GM12878 (cell line): ENCODE measurements at regions of chr17 and their contacts with region 1.

Region 1: GRCh38 chr17:37373530-37374159 is 2.1 kb upstream of the C17orf78 start:
- DNase-seq: no peak
- ATAC-seq: peak; percentile 99
- H3K4me3 ChIP-seq: no peak overlapping the region
- H3K27ac ChIP-seq: no peak overlapping the region
- H3K4me1 ChIP-seq: no peaks in the 10 kb centered on the region
- H3K27me3 ChIP-seq: no peaks in the 10 kb centered on the region
- CTCF ChIP-seq: peak; percentile 99 to 100 (median 100); a peak in 5 of 6 replicates
- EP300 ChIP-seq: no peak
- POLR2A ChIP-seq: no peak
- RAD21 ChIP-seq: peak; percentile 100

Region 2: GRCh38 chr17:36629252-36629847 is 744.3 kb before region 1 on chr17:
- CTCF ChIA-PET with region 1: interaction called, 9 read pairs
- POLR2A ChIA-PET with region 1: no interaction called
- RAD21 ChIA-PET with region 1: interaction called, 6 read pairs
- SMC1A ChIA-PET with region 1: interaction called, 4 read pairs
- in situ Hi-C with region 1: no loop called
- intact Hi-C with region 1: loop called (anchors 5 kb)
- DNase-seq: peak; percentile 12
- ATAC-seq: peak; percentile 99
- H3K4me3 ChIP-seq: no peak overlapping the region
- H3K27ac ChIP-seq: no peak overlapping the region
- H3K4me1 ChIP-seq: no peaks in the 10 kb centered on the region
- H3K27me3 ChIP-seq: peaks cover 0 to 2% of the 10 kb centered on the region in 2 experiments; a peak in 2 of 4 replicates
- CTCF ChIP-seq: peak; percentile 98 to 99 (median 98); a peak in 5 of 6 replicates
- EP300 ChIP-seq: no peak
- POLR2A ChIP-seq: no peak
- RAD21 ChIP-seq: peak; percentile 92

Region 3: GRCh38 chr17:37358830-37359681 is 14.6 kb before region 1 on chr17:
- CTCF ChIA-PET with region 1: interaction called, 19 read pairs
- POLR2A ChIA-PET with region 1: interaction called, 5 read pairs
- RAD21 ChIA-PET with region 1: interaction called, 12 read pairs
- SMC1A ChIA-PET with region 1: interaction called, 10 read pairs
- in situ Hi-C with region 1: no loop called
- intact Hi-C with region 1: no loop called
- DNase-seq: peak; percentile 80
- ATAC-seq: peak; percentile 95
- H3K4me3 ChIP-seq: peak overlapping the region; percentile 78
- H3K27ac ChIP-seq: peak overlapping the region; percentile 71
- H3K4me1 ChIP-seq: peaks cover 12% of the 10 kb centered on the region
- H3K27me3 ChIP-seq: no peaks in the 10 kb centered on the region
- CTCF ChIP-seq: 0 out of 6 replicates have a peak, but pooled peaks of 1 of the 3 experiments have one; percentile 10
- EP300 ChIP-seq: no peak
- POLR2A ChIP-seq: peak; percentile 79
- RAD21 ChIP-seq: no peak

Region 4: GRCh38 chr17:37399404-37399803 is 25.8 kb after region 1 on chr17:
- CTCF ChIA-PET with region 1: interaction called, 187 read pairs
- POLR2A ChIA-PET with region 1: interaction called, 5 read pairs
- RAD21 ChIA-PET with region 1: interaction called, 81 read pairs
- SMC1A ChIA-PET with region 1: interaction called, 81 read pairs
- in situ Hi-C with region 1: no loop called
- intact Hi-C with region 1: loop called (anchors 1 kb)
- DNase-seq: no peak
- ATAC-seq: no peak
- H3K4me3 ChIP-seq: no peak overlapping the region
- H3K27ac ChIP-seq: no peak overlapping the region
- H3K4me1 ChIP-seq: peaks cover 10% of the 10 kb centered on the region
- H3K27me3 ChIP-seq: no peaks in the 10 kb centered on the region
- CTCF ChIP-seq: no peak
- EP300 ChIP-seq: no peak
- POLR2A ChIP-seq: no peak
- RAD21 ChIP-seq: no peak

Region 5: GRCh38 chr17:37570527-37571093 is 197.0 kb after region 1 on chr17:
- CTCF ChIA-PET with region 1: interaction called, 18 read pairs
- POLR2A ChIA-PET with region 1: no interaction called
- RAD21 ChIA-PET with region 1: interaction called, 5 read pairs
- SMC1A ChIA-PET with region 1: interaction called, 8 read pairs
- in situ Hi-C with region 1: no loop called
- intact Hi-C with region 1: no loop called
- DNase-seq: no peak
- ATAC-seq: peak; percentile 71
- H3K4me3 ChIP-seq: no peak overlapping the region
- H3K27ac ChIP-seq: no peak overlapping the region
- H3K4me1 ChIP-seq: no peaks in the 10 kb centered on the region
- H3K27me3 ChIP-seq: no peaks in the 10 kb centered on the region
- CTCF ChIP-seq: peak; percentile 40 to 50 (median 50)
- EP300 ChIP-seq: no peak
- POLR2A ChIP-seq: no peak
- RAD21 ChIP-seq: 0 out of 2 replicates have a peak, but pooled peaks have one; percentile 33

Region 6: GRCh38 chr17:38428643-38429371 is 1055.2 kb after region 1 on chr17:
- CTCF ChIA-PET with region 1: no interaction called
- POLR2A ChIA-PET with region 1: no interaction called
- RAD21 ChIA-PET with region 1: no interaction called
- SMC1A ChIA-PET with region 1: no interaction called
- in situ Hi-C with region 1: no loop called
- intact Hi-C with region 1: no loop called
- DNase-seq: no peak
- ATAC-seq: peak; percentile 49
- H3K4me3 ChIP-seq: peak overlapping the region; percentile 80; the same call in 1 of the 2 replicates
- H3K27ac ChIP-seq: no peak overlapping the region
- H3K4me1 ChIP-seq: peaks cover 4% of the 10 kb centered on the region
- H3K27me3 ChIP-seq: no peaks in the 10 kb centered on the region; a peak in 1 of 4 replicates
- CTCF ChIP-seq: no peak
- EP300 ChIP-seq: no peak
- POLR2A ChIP-seq: no peak
- RAD21 ChIP-seq: no peak